IMR-90 (cell line): ENCODE measurements at regions of chr12 and their contacts with region 1.

Region 1: GRCh38 chr12:50038336-50038735 is 13.0 kb upstream of the RACGAP1 start:
- DNase-seq: no peak
- ATAC-seq: no peak
- H3K4me3 ChIP-seq: no peak overlapping the region
- H3K27ac ChIP-seq: no peak overlapping the region
- H3K4me1 ChIP-seq: no peaks in the 10 kb centered on the region
- H3K27me3 ChIP-seq: peaks cover 10% of the 10 kb centered on the region
- CTCF ChIP-seq: no peak
- POLR2A ChIP-seq: no peak
- RAD21 ChIP-seq: no peak

Region 2: GRCh38 chr12:49872781-49873181 is 165.6 kb before region 1 on chr12:
- CTCF ChIA-PET with region 1: no interaction called
- POLR2A ChIA-PET with region 1: no interaction called
- dilution Hi-C with region 1: no loop called
- in situ Hi-C with region 1: no loop called
- intact Hi-C with region 1: no loop called
- DNase-seq: peak; percentile 54
- ATAC-seq: no peak
- H3K4me3 ChIP-seq: no peak overlapping the region
- H3K27ac ChIP-seq: no peak overlapping the region
- H3K4me1 ChIP-seq: peaks cover 24% of the 10 kb centered on the region
- H3K27me3 ChIP-seq: peaks cover 13% of the 10 kb centered on the region
- CTCF ChIP-seq: no peak
- POLR2A ChIP-seq: no peak
- RAD21 ChIP-seq: no peak

Region 3: DNA sequence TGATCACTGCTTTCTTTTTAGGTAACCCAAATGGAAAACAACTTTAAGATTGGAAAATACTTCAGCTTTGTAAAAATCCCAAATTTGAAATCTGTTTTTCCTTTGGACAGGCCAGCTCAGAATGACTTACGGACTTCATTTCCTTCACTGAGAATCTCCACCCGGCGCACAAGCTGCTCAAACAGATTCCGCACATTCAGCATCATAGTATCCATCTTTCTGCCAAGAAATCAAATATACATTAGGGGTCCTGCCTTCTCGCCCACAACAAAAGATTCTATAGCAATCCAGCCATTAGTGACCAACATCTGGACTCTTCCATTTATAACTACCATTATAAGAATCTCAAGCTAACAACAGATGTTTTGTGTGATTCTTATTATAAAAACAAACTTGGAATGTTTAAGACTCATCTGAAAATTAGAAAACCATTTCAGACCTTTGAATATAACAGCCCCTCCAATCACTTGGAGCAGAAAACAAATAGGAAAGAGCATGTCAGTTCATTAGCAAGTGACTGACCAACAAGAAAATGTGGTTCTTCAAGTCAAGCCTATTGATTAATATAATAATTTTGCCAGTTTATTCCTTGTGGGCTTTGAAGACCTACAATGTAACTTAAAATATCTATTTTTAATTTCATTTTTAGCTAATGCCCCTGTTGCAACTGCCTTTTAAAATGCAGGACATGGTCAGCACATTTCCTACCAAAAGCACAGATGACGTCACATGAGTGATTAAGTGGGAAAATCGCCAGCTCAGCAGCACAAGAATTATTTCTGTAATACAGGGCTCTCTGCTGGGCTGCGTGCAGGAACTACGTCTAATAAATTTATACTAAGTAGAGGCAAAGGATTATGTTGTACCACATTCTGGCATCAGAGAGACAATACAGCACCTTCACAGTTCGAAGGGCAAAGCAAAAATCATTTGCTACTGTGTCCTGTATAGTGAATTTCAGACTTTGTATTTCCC is 21.5 kb before region 1 on chr12:
- CTCF ChIA-PET with region 1: interaction called, 12 read pairs
- POLR2A ChIA-PET with region 1: no interaction called
- dilution Hi-C with region 1: no loop called
- in situ Hi-C with region 1: no loop called
- intact Hi-C with region 1: no loop called
- DNase-seq: peak; percentile 93
- ATAC-seq: peak; percentile 74
- H3K4me3 ChIP-seq: peak overlapping the region; percentile 35; the same call in 1 of the 2 replicates
- H3K27ac ChIP-seq: peak overlapping the region; percentile 66; the same call in 1 of the 2 replicates
- H3K4me1 ChIP-seq: peaks cover 6% of the 10 kb centered on the region
- H3K27me3 ChIP-seq: no peaks in the 10 kb centered on the region
- CTCF ChIP-seq: no peak
- POLR2A ChIP-seq: no peak
- RAD21 ChIP-seq: no peak